Activated naive CD4-positive, alpha-beta T cell treated with anti-CD3 and anti-CD28 coated beads, Interleukin-2, amount 10 ng/mL, durations not matched to agents 7 days and 5 days (primary cell): ENCODE measurements at regions of chr1 and their contacts with region 1.

Region 1: DNA sequence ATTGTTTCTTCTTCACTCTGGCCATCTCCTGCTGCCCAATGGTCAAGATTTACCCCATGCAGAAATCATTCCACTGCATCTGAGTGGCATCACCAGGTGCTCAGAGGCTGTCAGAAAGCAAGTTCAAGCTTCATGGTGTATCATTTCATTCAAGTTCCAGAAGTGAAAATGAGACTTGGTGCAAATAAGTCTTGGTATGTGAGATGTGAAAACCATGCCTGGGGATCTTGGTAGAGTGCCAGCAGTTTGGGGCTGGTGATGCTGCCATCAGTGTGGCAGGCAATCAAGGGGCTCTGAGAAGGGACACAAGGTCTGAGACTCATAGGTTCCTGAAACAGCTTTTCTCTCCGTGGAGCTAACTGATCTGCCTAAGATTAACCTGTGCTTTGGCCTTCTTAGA is 52.0 kb downstream of the CD2 start:
- DNase-seq: peak; percentile 55
- H3K4me3 Mint-ChIP-seq: peak overlapping the region; percentile 45
- H3K27ac Mint-ChIP-seq: peak overlapping the region; percentile 91
- H3K4me1 Mint-ChIP-seq: peaks cover 92% of the 10 kb centered on the region
- H3K27me3 Mint-ChIP-seq: no peaks in the 10 kb centered on the region

Region 2: DNA sequence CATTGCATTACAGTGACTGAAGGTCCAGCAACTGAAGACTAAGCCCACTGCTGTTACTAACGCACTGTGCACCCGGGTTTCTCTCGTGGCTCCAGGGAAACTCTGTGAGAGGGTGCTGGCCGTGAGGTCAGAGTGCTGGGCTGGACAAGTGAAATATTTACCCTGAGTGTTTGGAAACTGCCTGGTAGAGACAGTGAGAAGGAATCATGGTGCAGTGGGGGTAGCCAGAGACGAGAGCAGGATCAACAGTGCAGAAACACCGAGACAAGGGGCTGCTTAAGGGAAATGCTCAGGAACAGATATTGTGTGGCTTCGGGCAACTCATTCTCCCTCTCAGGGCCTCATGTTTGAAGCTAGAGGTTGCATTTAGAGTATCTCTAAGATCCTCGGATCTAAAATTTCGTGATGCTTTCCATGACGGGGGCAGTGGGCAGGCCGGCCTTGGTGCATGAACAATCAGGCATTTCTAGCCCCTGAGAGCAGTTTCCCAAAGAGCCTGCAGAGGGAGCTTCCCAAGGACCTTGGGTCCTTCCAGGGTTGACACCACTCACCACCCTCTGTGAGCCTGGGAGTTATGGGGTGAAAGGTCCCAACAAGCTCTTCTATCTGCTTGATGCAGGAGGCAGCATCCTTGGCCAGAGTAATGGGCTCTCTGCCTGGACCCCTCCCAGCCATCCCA is 42.3 kb before region 1 on chr1:
- CTCF ChIA-PET with region 1: interaction called, 39 read pairs
- DNase-seq: peak; percentile 64
- H3K4me3 Mint-ChIP-seq: peak overlapping the region; percentile 71
- H3K27ac Mint-ChIP-seq: peak overlapping the region; percentile 99
- H3K4me1 Mint-ChIP-seq: peaks cover 99% of the 10 kb centered on the region
- H3K27me3 Mint-ChIP-seq: no peaks in the 10 kb centered on the region

Region 3: GRCh38 chr1:116769561-116769977 is 36.7 kb before region 1 on chr1:
- CTCF ChIA-PET with region 1: interaction called, 39 read pairs
- DNase-seq: peak; percentile 85
- H3K4me3 Mint-ChIP-seq: peak overlapping the region; percentile 59
- H3K27ac Mint-ChIP-seq: peak overlapping the region; percentile 99
- H3K4me1 Mint-ChIP-seq: peaks cover 88% of the 10 kb centered on the region
- H3K27me3 Mint-ChIP-seq: no peaks in the 10 kb centered on the region